ENCODE measurements at regions of chr16 and their contacts with region 1.

Region 1: GRCh38 chr16:75789237-75789636 is 62.9 kb upstream of the CPHXL start:
- DNase-seq: peak; percentile 66
- H3K4me3 ChIP-seq: no peak overlapping the region
- H3K27ac ChIP-seq: no peak overlapping the region
- H3K4me1 ChIP-seq: no peaks in the 10 kb centered on the region
- H3K27me3 ChIP-seq: peaks cover 17% of the 10 kb centered on the region
- CTCF ChIP-seq: peak; percentile 84

Region 2: DNA sequence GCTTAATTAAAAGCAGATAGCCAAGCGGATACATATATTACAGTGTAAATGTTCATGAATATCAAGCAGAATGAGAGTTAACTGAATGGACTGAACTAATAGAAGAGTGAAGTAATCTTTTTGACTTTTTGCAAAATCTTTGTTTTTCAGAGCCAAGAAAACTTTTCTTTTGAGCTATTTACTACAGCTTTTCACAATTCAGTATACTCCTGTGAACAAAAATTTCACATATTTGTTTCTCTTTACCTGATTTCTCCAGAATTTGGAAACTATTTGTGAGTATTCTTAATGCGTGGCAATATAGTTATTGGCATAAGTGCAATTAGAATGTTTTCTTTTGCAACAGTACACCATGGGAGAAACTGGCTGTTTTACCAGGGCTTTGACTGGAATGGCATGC is 78.9 kb before region 1 on chr16:
- CTCF ChIA-PET with region 1: no interaction called
- POLR2A ChIA-PET with region 1: no interaction called
- intact Hi-C with region 1: no loop called
- DNase-seq: no peak
- H3K4me3 ChIP-seq: no peak overlapping the region
- H3K27ac ChIP-seq: no peak overlapping the region
- H3K4me1 ChIP-seq: no peaks in the 10 kb centered on the region
- H3K27me3 ChIP-seq: no peaks in the 10 kb centered on the region
- CTCF ChIP-seq: no peak

Region 3: GRCh38 chr16:75733305-75734211 is 55.7 kb before region 1 on chr16:
- CTCF ChIA-PET with region 1: no interaction called
- POLR2A ChIA-PET with region 1: no interaction called
- intact Hi-C with region 1: no loop called
- DNase-seq: peak; percentile 21
- H3K4me3 ChIP-seq: no peak overlapping the region
- H3K27ac ChIP-seq: no peak overlapping the region
- H3K4me1 ChIP-seq: peaks cover 6% of the 10 kb centered on the region
- H3K27me3 ChIP-seq: no peaks in the 10 kb centered on the region
- CTCF ChIP-seq: no peak

Region 4: GRCh38 chr16:75836347-75837010 is 47.2 kb after region 1 on chr16:
- CTCF ChIA-PET with region 1: no interaction called
- POLR2A ChIA-PET with region 1: no interaction called
- intact Hi-C with region 1: no loop called
- DNase-seq: no peak
- H3K4me3 ChIP-seq: no peak overlapping the region
- H3K27ac ChIP-seq: no peak overlapping the region
- H3K4me1 ChIP-seq: no peaks in the 10 kb centered on the region
- H3K27me3 ChIP-seq: peaks cover 7% of the 10 kb centered on the region
- CTCF ChIP-seq: no peak

Region 5: DNA sequence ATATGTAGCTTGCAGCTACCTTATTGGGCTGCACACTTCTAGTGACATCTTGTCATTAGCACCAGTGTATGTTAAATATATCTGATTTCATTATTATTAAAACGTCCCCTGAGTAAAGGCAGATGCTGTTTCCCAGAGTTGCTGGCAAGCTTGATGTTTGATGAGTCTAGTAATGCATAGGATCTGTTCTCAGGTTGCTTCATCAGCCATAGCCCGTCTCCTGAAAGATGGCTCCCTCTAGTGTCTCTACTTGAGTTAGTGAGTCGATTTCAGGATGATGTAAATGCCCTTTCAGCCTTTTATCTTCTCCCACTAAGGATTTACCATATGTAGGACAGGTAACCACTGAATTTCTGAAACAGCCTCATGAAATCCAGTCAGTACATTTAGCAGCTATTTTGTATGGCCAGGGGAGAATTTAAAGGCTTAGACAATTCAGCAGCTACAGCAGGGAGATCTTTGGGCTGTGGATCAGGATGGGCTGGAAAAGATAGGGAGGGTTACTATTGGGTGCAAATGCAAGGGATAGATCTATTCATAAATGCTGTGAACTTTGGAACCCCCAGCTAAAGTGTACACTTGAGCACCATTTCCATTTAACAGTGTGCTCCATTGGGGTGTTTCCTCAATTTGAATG is 864.3 kb after region 1 on chr16:
- CTCF ChIA-PET with region 1: no interaction called
- POLR2A ChIA-PET with region 1: no interaction called
- intact Hi-C with region 1: loop called (anchors 5 kb)
- DNase-seq: peak; percentile 65
- H3K4me3 ChIP-seq: no peak overlapping the region
- H3K27ac ChIP-seq: no peak overlapping the region
- H3K4me1 ChIP-seq: no peaks in the 10 kb centered on the region
- H3K27me3 ChIP-seq: no peaks in the 10 kb centered on the region
- CTCF ChIP-seq: peak; percentile 64

Region 6: GRCh38 chr16:77171745-77172635 is 1382.8 kb after region 1 on chr16:
- CTCF ChIA-PET with region 1: no interaction called
- POLR2A ChIA-PET with region 1: no interaction called
- intact Hi-C with region 1: loop called (anchors 1 kb)
- DNase-seq: peak; percentile 74
- H3K4me3 ChIP-seq: no peak overlapping the region
- H3K27ac ChIP-seq: no peak overlapping the region
- H3K4me1 ChIP-seq: no peaks in the 10 kb centered on the region
- H3K27me3 ChIP-seq: peaks cover 25% of the 10 kb centered on the region
- CTCF ChIP-seq: peak; percentile 73

Region 7: DNA sequence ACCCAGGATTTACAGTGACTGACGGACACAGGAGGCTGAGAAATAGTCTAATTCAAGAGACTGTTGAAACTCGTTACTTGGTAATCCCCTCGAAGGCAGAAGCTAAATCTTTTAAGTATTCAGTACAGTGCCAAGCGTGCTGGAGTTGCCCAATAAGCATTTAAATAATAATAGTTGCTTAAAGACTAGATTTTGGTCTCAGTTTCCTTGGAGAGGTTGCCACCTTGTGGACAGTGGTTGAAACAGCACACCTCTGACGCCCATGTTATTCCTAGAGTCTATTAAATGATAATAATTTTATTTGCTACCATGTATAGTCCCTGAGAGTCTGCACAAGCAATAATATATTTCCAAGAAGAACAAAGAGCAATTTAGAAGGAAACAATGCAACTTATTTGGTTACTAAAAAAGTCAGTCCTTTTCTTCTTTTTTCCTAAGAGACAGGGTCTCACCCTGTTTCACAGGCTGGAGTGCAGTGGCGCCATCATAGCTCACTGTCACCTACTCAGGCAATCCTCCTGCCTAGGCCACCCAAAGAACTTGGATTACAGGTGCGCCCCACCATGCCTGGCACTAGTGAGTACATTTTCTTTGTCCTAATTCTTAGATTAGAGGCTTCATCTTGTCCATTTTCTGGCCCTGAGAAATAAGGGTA is 1795.1 kb after region 1 on chr16:
- CTCF ChIA-PET with region 1: no interaction called
- POLR2A ChIA-PET with region 1: no interaction called
- intact Hi-C with region 1: loop called (anchors 10 kb)
- DNase-seq: peak; percentile 77
- H3K4me3 ChIP-seq: no peak overlapping the region
- H3K27ac ChIP-seq: no peak overlapping the region
- H3K4me1 ChIP-seq: no peaks in the 10 kb centered on the region
- H3K27me3 ChIP-seq: no peaks in the 10 kb centered on the region
- CTCF ChIP-seq: peak; percentile 87